ENCODE measurements at regions of chr17 and their contacts with region 1.

Region 1: DNA sequence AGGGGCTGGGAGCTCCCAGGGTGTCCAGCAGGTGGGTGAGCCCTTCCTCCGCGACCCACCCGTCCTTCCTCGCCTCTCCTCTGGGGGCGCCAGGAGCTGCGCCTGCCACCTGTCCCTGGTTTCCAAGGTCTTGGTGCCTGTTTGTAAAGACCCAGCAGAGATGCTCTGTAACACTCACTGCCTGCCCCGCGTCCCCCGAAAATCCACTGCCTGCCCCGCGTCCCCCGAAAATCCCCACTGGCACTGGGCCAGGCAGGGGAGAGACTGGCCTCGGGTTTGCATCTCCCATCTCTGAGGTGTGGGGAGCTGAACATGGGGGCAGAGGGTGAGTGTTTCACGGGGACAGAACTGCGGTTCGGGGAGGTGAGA is 45.6 kb downstream of the BAHCC1 start:
- DNase-seq: peak; percentile 84
- ATAC-seq: peak; percentile 77
- H3K4me3 Mint-ChIP-seq: no peak overlapping the region
- H3K27ac Mint-ChIP-seq: no peak overlapping the region
- H3K4me1 Mint-ChIP-seq: no peaks in the 10 kb centered on the region
- H3K27me3 Mint-ChIP-seq: no peaks in the 10 kb centered on the region
- CTCF ChIP-seq: peak; percentile 79

Region 2: DNA sequence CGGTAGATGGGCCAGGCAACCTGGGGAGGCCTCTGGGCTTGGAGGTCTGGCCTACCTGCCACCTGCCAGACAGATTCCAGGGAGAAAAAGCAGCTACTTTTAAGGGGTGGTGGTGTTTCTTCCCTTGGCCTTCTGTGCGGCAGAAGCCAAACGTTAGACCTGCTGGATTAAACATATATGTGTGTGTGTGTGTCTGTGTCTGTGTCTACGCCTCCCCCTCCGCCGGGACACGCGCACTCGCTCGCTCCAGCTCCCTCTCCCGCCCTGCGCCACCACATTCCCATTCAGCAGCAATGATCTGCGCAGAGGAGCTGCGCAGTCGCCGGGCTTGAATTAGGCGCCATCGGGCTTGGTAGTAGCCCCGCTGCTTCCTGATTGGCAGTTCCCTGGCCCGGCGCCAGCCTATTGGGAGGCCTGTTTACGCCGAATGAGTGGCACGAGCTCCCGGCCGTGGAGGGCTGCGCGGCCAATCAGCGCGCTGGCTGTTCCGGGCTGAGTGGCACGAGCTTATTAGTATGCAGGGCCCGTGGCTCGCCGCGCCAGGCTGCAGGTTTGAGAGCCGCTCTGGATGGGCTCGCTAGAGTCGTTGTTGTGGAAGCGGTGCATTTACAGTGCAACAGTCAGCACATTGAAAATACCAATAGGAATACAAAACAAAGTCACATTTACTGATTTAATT is 45.8 kb before region 1 on chr17 and contains the start of gene BAHCC1:
- CTCF ChIA-PET with region 1: interaction called, 11 read pairs
- POLR2A ChIA-PET with region 1: no interaction called
- DNase-seq: peak; percentile 100
- ATAC-seq: peak; percentile 78
- H3K4me3 Mint-ChIP-seq: peak within 1 kb of the TSS; percentile 72
- H3K27ac Mint-ChIP-seq: peak within 1 kb of the TSS; percentile 93
- H3K4me1 Mint-ChIP-seq: peaks cover 34% of the 10 kb centered on the region
- H3K27me3 Mint-ChIP-seq: peaks cover 69% of the 10 kb centered on the region
- CTCF ChIP-seq: no peak
- total RNA-seq, gene BAHCC1: 17.1 to 29.8 TPM (median 21.5 TPM) in 3 replicates

Region 3: DNA sequence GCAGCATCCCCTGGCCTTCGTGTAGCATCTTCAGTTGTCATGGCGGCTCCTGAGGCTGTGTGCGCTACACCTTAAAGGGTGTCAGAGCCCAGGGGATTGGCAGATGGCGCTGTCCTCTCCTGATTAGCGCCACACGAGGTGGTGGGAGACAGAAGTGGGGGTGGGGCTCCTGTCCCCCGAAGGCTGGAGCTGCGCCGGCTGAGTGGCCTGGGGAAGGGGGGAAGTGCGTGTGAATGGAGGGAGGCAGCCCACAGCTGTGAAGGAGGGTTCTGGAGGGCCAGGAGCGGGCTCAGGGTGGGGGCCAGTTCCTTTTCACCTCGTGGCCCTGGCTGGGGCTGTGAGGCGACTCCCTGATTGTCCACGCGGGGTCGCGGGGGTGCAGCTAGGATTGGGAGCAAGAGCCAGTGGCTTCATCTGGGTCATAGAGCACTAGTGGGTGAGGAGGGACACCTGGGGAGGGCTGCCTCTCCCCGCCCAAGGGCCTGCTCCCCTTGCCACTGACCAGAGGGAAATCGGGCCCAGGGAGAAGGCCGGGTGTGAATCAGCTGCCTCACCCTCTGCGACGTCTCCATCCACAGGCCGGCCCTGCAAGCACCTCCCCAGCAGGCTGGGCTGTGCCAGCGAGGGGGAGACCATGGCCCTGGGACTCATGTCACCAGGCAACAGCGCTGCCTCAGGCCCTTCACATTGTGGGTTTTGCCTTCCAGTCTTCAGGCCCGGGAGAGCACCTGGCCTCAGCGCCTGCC is 31.5 kb before region 1 on chr17:
- CTCF ChIA-PET with region 1: interaction called, 13 read pairs
- POLR2A ChIA-PET with region 1: no interaction called
- DNase-seq: peak; percentile 55
- ATAC-seq: peak; percentile 72
- H3K4me3 Mint-ChIP-seq: no peak overlapping the region
- H3K27ac Mint-ChIP-seq: no peak overlapping the region
- H3K4me1 Mint-ChIP-seq: peaks cover 25% of the 10 kb centered on the region
- H3K27me3 Mint-ChIP-seq: peaks cover 35% of the 10 kb centered on the region
- CTCF ChIP-seq: 0 out of 2 replicates have a peak, but pooled peaks have one; percentile 18

Region 4: GRCh38 chr17:81428948-81429774 is 11.7 kb before region 1 on chr17:
- CTCF ChIA-PET with region 1: interaction called, 45 read pairs
- POLR2A ChIA-PET with region 1: no interaction called
- DNase-seq: no peak
- ATAC-seq: no peak
- H3K4me3 Mint-ChIP-seq: no peak overlapping the region
- H3K27ac Mint-ChIP-seq: no peak overlapping the region
- H3K4me1 Mint-ChIP-seq: no peaks in the 10 kb centered on the region
- H3K27me3 Mint-ChIP-seq: no peaks in the 10 kb centered on the region
- CTCF ChIP-seq: no peak

Region 5: GRCh38 chr17:81519284-81519955 is 78.6 kb after region 1 on chr17:
- CTCF ChIA-PET with region 1: interaction called, 14 read pairs
- POLR2A ChIA-PET with region 1: no interaction called
- DNase-seq: peak; percentile 68
- ATAC-seq: peak; percentile 19
- H3K4me3 Mint-ChIP-seq: peak overlapping the region; percentile 42
- H3K27ac Mint-ChIP-seq: no peak overlapping the region
- H3K4me1 Mint-ChIP-seq: peaks cover 30% of the 10 kb centered on the region
- H3K27me3 Mint-ChIP-seq: peaks cover 42% of the 10 kb centered on the region
- CTCF ChIP-seq: peak; percentile 51

Measured in WTC11 (cell line).